ENCODE measurements at regions of chr7 and their contacts with region 1.

Region 1: GRCh38 chr7:106153891-106154449 is 41.9 kb upstream of the SYPL1 start:
- DNase-seq: peak; percentile 82
- H3K4me3 Mint-ChIP-seq: no peak overlapping the region
- H3K27ac Mint-ChIP-seq: no peak overlapping the region
- H3K4me1 Mint-ChIP-seq: peaks cover 17% of the 10 kb centered on the region
- H3K27me3 Mint-ChIP-seq: peaks cover 36% of the 10 kb centered on the region

Region 2: DNA sequence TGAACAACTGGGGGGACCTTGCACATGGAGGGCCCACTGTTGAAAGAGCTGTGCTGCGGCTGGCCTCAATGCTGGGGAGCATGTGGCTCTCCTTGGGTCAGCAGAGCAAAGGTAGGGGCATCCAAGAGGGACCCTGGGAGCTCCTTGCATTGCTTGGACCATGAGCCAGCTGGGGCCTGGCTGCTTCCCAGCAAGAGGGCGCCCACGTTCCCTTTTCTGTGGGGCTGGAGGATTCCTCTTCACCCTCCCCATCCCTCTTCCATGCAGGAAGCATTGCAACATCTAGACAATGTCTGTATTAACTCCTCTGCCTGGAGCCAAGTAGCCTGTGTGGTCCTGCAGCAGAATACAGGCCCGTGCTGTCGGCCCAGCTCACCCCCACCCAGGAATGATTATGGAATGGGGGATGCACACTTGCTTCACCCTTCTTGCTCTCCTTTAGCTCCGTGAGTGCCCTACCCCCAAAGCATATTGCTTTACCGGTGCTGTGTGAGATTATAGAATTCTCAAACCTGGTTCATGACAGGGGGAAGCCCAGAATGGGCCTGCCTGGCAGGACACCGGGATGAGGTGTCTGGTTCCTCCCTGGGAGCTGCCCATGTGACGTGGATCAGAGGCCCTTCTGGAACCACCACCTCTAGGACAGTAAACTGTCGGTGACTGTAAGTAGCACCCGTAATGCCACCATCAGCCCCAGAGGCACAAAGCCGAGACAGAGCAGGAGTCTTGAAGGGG is 103.8 kb before region 1 on chr7:
- CTCF ChIA-PET with region 1: interaction called, 190 read pairs
- DNase-seq: no peak
- H3K4me3 Mint-ChIP-seq: no peak overlapping the region
- H3K27ac Mint-ChIP-seq: no peak overlapping the region
- H3K4me1 Mint-ChIP-seq: no peaks in the 10 kb centered on the region
- H3K27me3 Mint-ChIP-seq: peaks cover 68% of the 10 kb centered on the region

Region 3: GRCh38 chr7:106056513-106057203 is 97.3 kb before region 1 on chr7:
- CTCF ChIA-PET with region 1: interaction called, 190 read pairs
- DNase-seq: peak; percentile 81
- H3K4me3 Mint-ChIP-seq: no peak overlapping the region
- H3K27ac Mint-ChIP-seq: no peak overlapping the region
- H3K4me1 Mint-ChIP-seq: peaks cover 28% of the 10 kb centered on the region
- H3K27me3 Mint-ChIP-seq: peaks cover 32% of the 10 kb centered on the region

Region 4: GRCh38 chr7:106071356-106071998 is 82.5 kb before region 1 on chr7:
- CTCF ChIA-PET with region 1: interaction called, 16 read pairs
- DNase-seq: peak; percentile 63
- H3K4me3 Mint-ChIP-seq: peak overlapping the region; percentile 67
- H3K27ac Mint-ChIP-seq: peak overlapping the region; percentile 99
- H3K4me1 Mint-ChIP-seq: peaks cover 58% of the 10 kb centered on the region
- H3K27me3 Mint-ChIP-seq: no peaks in the 10 kb centered on the region

Region 5: DNA sequence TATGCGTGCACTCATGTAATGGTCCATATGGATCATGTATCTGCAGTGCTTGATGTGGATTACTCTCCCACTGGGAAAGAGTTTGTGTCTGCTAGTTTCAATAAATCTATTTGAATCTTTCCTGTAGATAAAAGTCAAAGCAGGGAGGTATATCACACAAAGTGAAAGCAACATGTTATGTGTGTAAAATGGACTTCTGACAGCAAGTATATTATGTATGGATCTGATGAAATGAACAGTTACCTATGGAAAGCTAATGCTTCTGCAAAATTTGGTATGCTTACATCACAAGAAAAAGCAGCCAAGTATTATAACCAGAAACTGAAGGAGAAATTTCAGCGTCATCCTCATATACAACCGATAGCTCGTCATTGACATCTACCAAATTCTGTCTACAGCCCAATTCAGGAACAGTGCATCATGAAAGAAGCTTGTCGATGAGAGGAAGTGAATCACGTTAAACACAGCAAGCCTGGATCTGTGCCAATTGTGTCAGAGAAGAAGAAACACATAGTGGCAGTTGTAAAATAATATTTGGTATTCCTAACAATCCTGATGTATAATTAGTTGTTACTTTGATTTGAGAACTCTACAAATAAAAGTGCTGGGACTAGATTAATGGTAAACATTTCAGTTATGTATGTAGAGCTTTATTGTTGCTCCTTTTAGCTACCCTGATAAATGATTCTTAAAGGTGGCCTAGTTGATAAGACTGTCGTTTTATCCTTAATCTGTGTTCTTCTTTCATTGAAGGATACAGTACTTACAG is 27.6 kb before region 1 on chr7:
- CTCF ChIA-PET with region 1: interaction called, 13 read pairs
- DNase-seq: peak; percentile 44
- H3K4me3 Mint-ChIP-seq: peak overlapping the region; percentile 62
- H3K27ac Mint-ChIP-seq: peak overlapping the region; percentile 78
- H3K4me1 Mint-ChIP-seq: peaks cover 15% of the 10 kb centered on the region
- H3K27me3 Mint-ChIP-seq: peaks cover 18% of the 10 kb centered on the region

Region 6: GRCh38 chr7:106143711-106144337 is 10.1 kb before region 1 on chr7:
- CTCF ChIA-PET with region 1: interaction called, 14 read pairs
- DNase-seq: no peak
- H3K4me3 Mint-ChIP-seq: no peak overlapping the region
- H3K27ac Mint-ChIP-seq: no peak overlapping the region
- H3K4me1 Mint-ChIP-seq: no peaks in the 10 kb centered on the region
- H3K27me3 Mint-ChIP-seq: peaks cover 19% of the 10 kb centered on the region

Region 7: GRCh38 chr7:106166655-106167342 is 12.8 kb after region 1 on chr7:
- CTCF ChIA-PET with region 1: interaction called, 39 read pairs
- DNase-seq: peak; percentile 57
- H3K4me3 Mint-ChIP-seq: no peak overlapping the region
- H3K27ac Mint-ChIP-seq: no peak overlapping the region
- H3K4me1 Mint-ChIP-seq: peaks cover 2% of the 10 kb centered on the region
- H3K27me3 Mint-ChIP-seq: peaks cover 25% of the 10 kb centered on the region